ENCODE measurements at regions of chr12 and their contacts with region 1.

Region 1: GRCh38 chr12:51025836-51026638 is at the start of gene SLC11A2:
- DNase-seq: peak; percentile 79 to 93 (median 88)
- ATAC-seq: peak; percentile 96
- H3K4me3 ChIP-seq: peak within 1 kb of the TSS; percentile 86
- H3K4me3 Mint-ChIP-seq: peak within 1 kb of the TSS; percentile 91 to 100 (median 98)
- H3K27ac ChIP-seq: peak within 1 kb of the TSS; percentile 80
- H3K27ac Mint-ChIP-seq: peak within 1 kb of the TSS; percentile 90 to 99 (median 97)
- H3K4me1 ChIP-seq: peaks cover 14 to 22% of the 10 kb centered on the region in 2 donors
- H3K4me1 Mint-ChIP-seq: peaks cover 39 to 65% (median 54%) of the 10 kb centered on the region in 7 donors
- H3K27me3 ChIP-seq: no peaks in the 10 kb centered on the region
- H3K27me3 Mint-ChIP-seq: peaks cover 0 to 13% (median 0%) of the 10 kb centered on the region in 5 donors
- total RNA-seq, gene SLC11A2: 49.3 to 65.4 (median 61.0) TPM

Region 2: DNA sequence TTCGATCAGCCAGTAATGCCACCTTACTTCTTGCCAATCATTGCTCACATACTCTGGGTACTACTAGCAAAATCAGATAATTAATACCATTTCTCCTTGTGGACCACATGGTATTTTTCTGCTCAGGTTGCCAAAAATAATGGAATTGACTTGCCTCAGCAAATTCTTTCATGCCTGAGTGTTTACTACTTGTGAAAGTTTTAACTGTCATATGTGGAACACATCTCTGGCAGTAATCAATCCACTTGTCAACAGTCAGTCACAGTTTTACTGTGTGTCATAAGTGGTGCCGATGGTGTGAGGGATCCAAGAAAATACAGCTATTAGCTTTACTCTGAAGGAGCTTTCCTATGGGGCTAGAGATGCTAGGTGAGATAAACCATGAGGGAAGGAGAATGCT is 317.4 kb before region 1 on chr12:
- CTCF ChIA-PET with region 1: no interaction called
- POLR2A ChIA-PET with region 1: no interaction called
- intact Hi-C with region 1: no loop called
- DNase-seq: no peak
- ATAC-seq: no peak
- H3K4me3 ChIP-seq: no peak overlapping the region
- H3K4me3 Mint-ChIP-seq: no peak overlapping the region
- H3K27ac ChIP-seq: no peak overlapping the region
- H3K27ac Mint-ChIP-seq: peak overlapping the region in 1 of 9 donors; percentile 43
- H3K4me1 ChIP-seq: no peaks in the 10 kb centered on the region
- H3K4me1 Mint-ChIP-seq: no peaks in the 10 kb centered on the region
- H3K27me3 ChIP-seq: no peaks in the 10 kb centered on the region
- H3K27me3 Mint-ChIP-seq: no peaks in the 10 kb centered on the region

Region 3: DNA sequence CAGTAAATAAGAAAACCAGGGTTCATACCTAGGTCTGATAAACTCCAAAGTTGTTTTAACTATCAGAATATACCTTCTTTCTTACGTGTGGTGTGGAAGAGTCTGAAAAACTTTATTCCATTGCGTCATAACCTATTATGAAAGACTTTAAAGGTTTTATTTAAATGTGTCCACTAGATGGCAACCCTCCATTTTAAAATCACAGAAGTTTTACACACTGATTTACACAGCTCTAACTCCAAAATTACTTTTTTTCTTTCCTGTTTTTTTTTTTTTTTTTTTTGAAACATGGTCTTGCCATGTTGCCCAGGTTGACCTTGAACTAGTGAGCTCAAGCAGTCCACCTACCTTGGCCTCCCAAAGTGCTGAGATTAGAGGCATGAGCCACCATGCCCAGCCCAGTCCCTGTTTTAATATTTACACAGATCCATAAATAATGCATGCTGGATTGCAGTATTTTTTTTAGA is 200.6 kb before region 1 on chr12:
- CTCF ChIA-PET with region 1: interaction called, 25 read pairs
- POLR2A ChIA-PET with region 1: interaction called, 7 read pairs
- intact Hi-C with region 1: loop called (anchors 1 kb)
- DNase-seq: peak in 7 of 9 donors; percentile 45 to 76 (median 69)
- ATAC-seq: peak; percentile 91
- H3K4me3 ChIP-seq: no peak overlapping the region
- H3K4me3 Mint-ChIP-seq: peak overlapping the region in 2 of 10 donors; percentile 34 to 77
- H3K27ac ChIP-seq: peak overlapping the region; percentile 73
- H3K27ac Mint-ChIP-seq: peak overlapping the region; percentile 56 to 99 (median 91)
- H3K4me1 ChIP-seq: peaks cover 0 to 4% of the 10 kb centered on the region in 2 donors
- H3K4me1 Mint-ChIP-seq: peaks cover 0 to 9% (median 6%) of the 10 kb centered on the region in 7 donors
- H3K27me3 ChIP-seq: no peaks in the 10 kb centered on the region
- H3K27me3 Mint-ChIP-seq: no peaks in the 10 kb centered on the region

Region 4: DNA sequence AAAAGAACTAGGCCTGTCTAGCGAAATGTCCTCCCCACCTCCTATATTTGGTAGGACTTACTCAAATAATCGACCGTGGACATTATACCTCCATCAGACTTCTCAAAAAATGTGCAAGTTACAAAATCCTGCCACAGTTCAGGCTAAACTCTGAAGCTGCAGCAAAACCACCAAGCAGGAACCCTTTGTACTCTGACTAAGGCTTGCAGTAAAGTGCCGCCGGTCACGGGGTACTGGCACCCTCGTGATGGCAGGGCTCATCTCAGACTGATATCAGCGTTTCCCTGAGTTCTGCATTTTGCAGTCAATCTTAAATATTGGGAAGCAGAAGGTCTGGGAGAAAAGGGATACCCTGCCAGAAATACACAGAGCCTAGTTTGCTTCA is 17.0 kb before region 1 on chr12:
- CTCF ChIA-PET with region 1: interaction called, 8 read pairs
- POLR2A ChIA-PET with region 1: interaction called, 18 read pairs
- intact Hi-C with region 1: loop called (anchors 1 to 2 kb)
- DNase-seq: peak; percentile 34 to 77 (median 68)
- ATAC-seq: peak; percentile 100
- H3K4me3 ChIP-seq: no peak overlapping the region
- H3K4me3 Mint-ChIP-seq: peak overlapping the region; percentile 48 to 93 (median 79)
- H3K27ac ChIP-seq: peak overlapping the region; percentile 65
- H3K27ac Mint-ChIP-seq: peak overlapping the region; percentile 72 to 95 (median 92)
- H3K4me1 ChIP-seq: peaks cover 0 to 27% of the 10 kb centered on the region in 2 donors
- H3K4me1 Mint-ChIP-seq: peaks cover 22 to 55% (median 47%) of the 10 kb centered on the region in 7 donors
- H3K27me3 ChIP-seq: no peaks in the 10 kb centered on the region
- H3K27me3 Mint-ChIP-seq: no peaks in the 10 kb centered on the region

Region 5: DNA sequence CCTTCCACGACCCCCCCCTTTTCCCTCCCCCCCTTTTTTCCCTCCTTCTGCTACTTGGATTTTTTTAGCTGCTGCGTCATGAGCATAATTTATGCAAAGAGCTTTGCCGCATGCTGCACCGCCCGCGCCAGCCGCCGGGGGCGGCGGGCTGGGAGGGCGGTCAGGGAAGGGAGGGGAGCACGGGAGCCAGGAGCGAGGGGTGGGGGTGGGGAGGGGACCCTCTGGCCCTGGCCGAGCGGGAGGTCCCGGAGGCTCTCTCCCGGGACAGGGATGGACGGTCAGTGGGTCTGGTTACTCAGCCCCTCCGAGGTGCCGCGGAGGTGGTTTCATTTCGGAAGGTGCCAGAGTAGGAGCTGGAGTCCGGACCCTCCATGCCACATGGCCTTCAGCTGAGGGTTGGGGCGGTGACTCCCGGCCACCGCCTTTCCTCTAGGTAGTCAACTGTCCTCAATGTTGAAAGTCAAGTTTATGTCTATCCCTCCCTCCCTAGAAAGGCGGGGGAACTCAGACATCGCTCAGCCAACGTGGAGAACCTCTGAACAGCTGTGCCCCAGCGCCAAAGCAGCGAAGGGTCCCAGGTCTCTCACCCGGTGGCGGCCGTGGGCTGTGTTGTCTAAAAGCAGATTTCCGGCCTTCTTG is 192.1 kb after region 1 on chr12 and contains the start of gene POU6F1:
- CTCF ChIA-PET with region 1: no interaction called
- POLR2A ChIA-PET with region 1: no interaction called
- intact Hi-C with region 1: loop called in 1 of 2 experiments (anchors 1 kb)
- DNase-seq: peak; percentile 64 to 81 (median 76)
- ATAC-seq: peak; percentile 88
- H3K4me3 ChIP-seq: peak within 1 kb of the TSS; percentile 90
- H3K4me3 Mint-ChIP-seq: peak within 1 kb of the TSS; percentile 82 to 98 (median 95)
- H3K27ac ChIP-seq: peak within 1 kb of the TSS; percentile 98
- H3K27ac Mint-ChIP-seq: peak within 1 kb of the TSS; percentile 83 to 98 (median 96)
- H3K4me1 ChIP-seq: peaks cover 10% of the 10 kb centered on the region in 2 donors
- H3K4me1 Mint-ChIP-seq: peaks cover 13 to 43% (median 33%) of the 10 kb centered on the region in 7 donors
- H3K27me3 ChIP-seq: no peaks in the 10 kb centered on the region
- H3K27me3 Mint-ChIP-seq: no peaks in the 10 kb centered on the region
- total RNA-seq, gene POU6F1: 5.1 to 85.5 (median 33.5) TPM

Region 6: GRCh38 chr12:51320695-51321320 is 294.8 kb after region 1 on chr12:
- CTCF ChIA-PET with region 1: no interaction called
- POLR2A ChIA-PET with region 1: interaction called, 4 read pairs
- intact Hi-C with region 1: loop called (anchors 5 kb)
- DNase-seq: peak in 3 of 9 donors; percentile 20 to 34 (median 21)
- ATAC-seq: no peak
- H3K4me3 ChIP-seq: peak overlapping the region; percentile 58
- H3K4me3 Mint-ChIP-seq: peak overlapping the region; percentile 69 to 99 (median 94)
- H3K27ac ChIP-seq: peak overlapping the region; percentile 95
- H3K27ac Mint-ChIP-seq: peak overlapping the region; percentile 89 to 99 (median 96)
- H3K4me1 ChIP-seq: peaks cover 58 to 65% of the 10 kb centered on the region in 2 donors
- H3K4me1 Mint-ChIP-seq: peaks cover 56 to 90% (median 72%) of the 10 kb centered on the region in 7 donors
- H3K27me3 ChIP-seq: no peaks in the 10 kb centered on the region
- H3K27me3 Mint-ChIP-seq: no peaks in the 10 kb centered on the region

Measured in naive thymus-derived CD4-positive, alpha-beta T cell (primary cell).